Vagina (tissue), 2 donors: ENCODE measurements at regions of chr12 and their contacts with region 1.

Region 1: GRCh38 chr12:49018261-49019119 is at the start of gene PRKAG1:
- DNase-seq: peak in 1 of 2 donors; percentile 96
- H3K4me3 ChIP-seq: peak within 1 kb of the TSS; percentile 75 to 87
- H3K27ac ChIP-seq: peak within 1 kb of the TSS; percentile 88
- H3K4me1 ChIP-seq: peaks cover 14% of the 10 kb centered on the region
- H3K27me3 ChIP-seq: no peaks in the 10 kb centered on the region
- CTCF ChIP-seq: peak in 2 of 3 experiments; percentile 43 to 64
- POLR2A ChIP-seq: peak in 1 of 2 donors; percentile 76
- total RNA-seq, gene PRKAG1: 67.0 TPM

Region 2: GRCh38 chr12:47281667-47282171 is 1736.8 kb before region 1 on chr12:
- intact Hi-C with region 1: loop called (anchors 10 kb)
- DNase-seq: no peak
- H3K4me3 ChIP-seq: no peak overlapping the region
- H3K27ac ChIP-seq: no peak overlapping the region
- H3K4me1 ChIP-seq: peaks cover 17% of the 10 kb centered on the region
- H3K27me3 ChIP-seq: no peaks in the 10 kb centered on the region
- CTCF ChIP-seq: no peak
- POLR2A ChIP-seq: no peak

Region 3: GRCh38 chr12:48995061-48995879 is 23.2 kb before region 1 on chr12:
- intact Hi-C with region 1: no loop called
- DNase-seq: no peak
- H3K4me3 ChIP-seq: peak overlapping the region in 1 of 2 donors; percentile 22
- H3K27ac ChIP-seq: no peak overlapping the region
- H3K4me1 ChIP-seq: peaks cover 47% of the 10 kb centered on the region
- H3K27me3 ChIP-seq: peaks cover 7% of the 10 kb centered on the region
- CTCF ChIP-seq: peak; percentile 43 to 66 (median 44)
- POLR2A ChIP-seq: no peak

Region 4: DNA sequence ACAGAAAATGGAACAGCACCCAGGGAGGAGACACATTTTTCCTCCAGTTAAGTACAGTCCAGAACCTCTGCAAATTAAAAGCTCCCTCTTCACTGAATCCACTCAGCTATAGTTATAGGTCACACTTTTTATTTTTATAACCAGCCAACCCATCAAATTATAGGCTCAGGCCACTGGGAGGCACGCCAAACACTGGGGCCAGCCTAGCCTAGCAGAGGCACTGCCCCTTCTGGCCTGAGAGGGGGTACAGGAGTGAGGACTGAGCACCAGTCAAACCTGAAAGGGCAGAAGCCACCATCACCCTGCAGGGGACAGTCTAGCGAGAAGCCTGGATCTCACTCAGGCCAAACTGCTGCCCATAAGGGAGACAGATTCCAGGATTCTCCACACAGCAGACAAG is 669.5 kb after region 1 on chr12:
- intact Hi-C with region 1: no loop called
- DNase-seq: no peak
- H3K4me3 ChIP-seq: no peak overlapping the region
- H3K27ac ChIP-seq: no peak overlapping the region
- H3K4me1 ChIP-seq: no peaks in the 10 kb centered on the region
- H3K27me3 ChIP-seq: no peaks in the 10 kb centered on the region
- CTCF ChIP-seq: no peak
- POLR2A ChIP-seq: no peak